Cardiac septum (tissue), 1 donor: ENCODE measurements at regions of chr3 and their contacts with region 1.

Region 1: GRCh38 chr3:138186803-138187295 is 252 bp upstream of the ARMC8 start:
- DNase-seq: peak; percentile 96

Region 2: GRCh38 chr3:138135146-138135832 is 51.6 kb before region 1 on chr3:
- intact Hi-C with region 1: no loop called
- DNase-seq: no peak

Region 3: DNA sequence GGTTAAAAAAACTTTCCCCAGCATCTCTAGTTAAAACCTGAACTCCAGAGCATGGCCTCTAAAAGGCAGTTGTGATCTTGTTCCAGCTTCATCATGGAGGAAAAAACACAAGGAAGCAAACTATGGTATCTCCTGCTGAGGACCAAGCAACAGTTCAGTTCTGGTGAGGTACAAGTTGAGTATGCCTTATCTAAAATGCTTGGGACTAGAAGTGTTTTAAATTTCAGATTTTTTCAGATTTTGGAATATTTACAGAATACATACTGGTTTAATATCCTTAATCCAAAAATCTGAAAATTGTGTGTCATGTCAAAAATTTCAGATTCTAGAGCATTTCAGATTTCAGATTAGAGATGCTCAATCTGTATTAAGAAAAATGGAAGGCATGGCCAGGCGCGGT is 21.8 kb before region 1 on chr3:
- intact Hi-C with region 1: no loop called
- DNase-seq: no peak

Region 4: DNA sequence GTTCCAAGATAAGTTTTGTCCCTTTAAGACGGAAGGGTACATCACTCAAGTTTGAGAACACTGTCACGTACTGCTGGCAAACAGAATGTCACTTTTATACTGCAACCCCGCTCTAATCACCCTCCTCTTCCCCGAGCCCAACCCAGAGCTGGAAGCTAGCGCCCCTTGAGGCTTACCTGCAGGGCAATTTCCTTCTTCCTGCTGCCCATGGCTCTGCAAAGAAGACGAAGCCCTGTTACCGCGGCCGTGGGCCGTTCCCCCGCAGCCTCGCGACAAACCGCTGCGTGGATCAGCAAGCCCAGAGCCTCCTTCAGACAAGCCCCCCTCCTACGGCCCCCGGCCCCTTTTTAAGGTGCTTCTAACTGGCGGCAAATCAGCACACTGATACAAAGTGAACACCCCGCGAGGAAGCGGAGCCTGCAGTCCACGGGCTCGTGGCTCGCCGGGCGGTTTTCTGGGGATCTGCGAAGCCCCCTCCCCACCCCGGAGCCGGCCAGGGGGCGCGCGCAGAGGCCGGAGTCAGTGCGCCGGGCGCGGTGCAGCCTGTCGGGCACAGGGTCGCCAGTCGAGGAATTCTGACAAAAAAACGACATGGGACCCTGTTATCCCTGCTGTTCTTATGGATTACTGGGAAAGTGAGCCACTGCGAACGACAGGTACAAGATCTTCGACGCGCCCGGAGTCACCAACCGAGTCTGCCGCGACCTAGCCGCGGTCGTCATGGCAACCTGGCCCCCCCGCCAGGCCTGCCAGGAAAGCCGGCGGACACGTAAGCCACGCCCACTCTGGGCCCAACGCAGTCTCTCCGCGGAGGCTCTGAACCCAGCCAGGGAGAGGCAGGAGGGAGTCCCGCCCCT is 142.5 kb after region 1 on chr3 and contains the start of gene NME9:
- intact Hi-C with region 1: loop called (anchors 10 kb)
- DNase-seq: peak; percentile 93
- total RNA-seq, gene NME9: not detected

Region 5: DNA sequence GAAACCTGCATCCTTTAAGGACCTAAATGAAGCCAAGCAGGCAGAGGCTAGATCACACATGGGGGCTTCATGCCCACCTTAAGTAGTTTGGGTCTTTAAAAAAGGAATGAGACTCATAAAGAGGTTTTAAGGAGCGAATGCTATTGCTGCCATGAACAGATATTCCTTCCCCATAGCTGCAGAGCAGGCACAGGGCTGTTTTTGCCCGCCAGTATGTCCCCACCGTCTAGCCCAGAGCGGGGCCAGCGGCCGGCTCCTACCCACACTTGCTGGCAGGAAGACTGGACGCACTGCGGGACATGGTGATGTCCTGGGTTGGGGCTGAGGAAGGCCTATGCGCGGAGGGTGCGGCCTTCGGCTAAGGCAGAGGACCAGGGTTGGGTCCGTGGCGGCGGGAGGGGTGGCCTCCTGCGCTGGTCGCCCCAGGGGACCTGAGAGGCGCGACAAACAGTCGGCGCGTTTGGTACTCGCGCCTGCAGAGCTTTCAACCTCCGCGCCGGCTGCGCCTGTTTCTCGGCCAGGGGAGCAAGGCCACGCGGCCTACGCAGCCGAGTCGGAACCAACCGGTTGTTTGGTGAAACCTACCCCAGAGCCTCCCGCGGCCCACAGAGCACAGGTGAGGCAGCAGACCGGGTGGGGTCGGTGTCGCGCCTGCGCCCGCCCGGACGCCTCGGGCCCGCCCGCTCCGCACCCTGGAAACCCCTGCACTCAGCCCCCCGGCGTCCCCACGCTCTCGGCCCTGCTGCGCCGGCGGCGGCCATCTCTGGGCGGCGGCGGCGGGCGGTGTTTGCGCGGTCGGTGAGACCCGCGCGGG is 421.7 kb after region 1 on chr3 and contains the start of gene FAIM:
- intact Hi-C with region 1: no loop called
- DNase-seq: peak; percentile 83
- total RNA-seq, gene FAIM: 3.5 TPM